Activated CD4-positive, alpha-beta T cell treated with anti-CD3 and anti-CD28 coated beads for 36 hours (primary cell): ENCODE measurements at regions of chr9 and their contacts with region 1.

Region 1: DNA sequence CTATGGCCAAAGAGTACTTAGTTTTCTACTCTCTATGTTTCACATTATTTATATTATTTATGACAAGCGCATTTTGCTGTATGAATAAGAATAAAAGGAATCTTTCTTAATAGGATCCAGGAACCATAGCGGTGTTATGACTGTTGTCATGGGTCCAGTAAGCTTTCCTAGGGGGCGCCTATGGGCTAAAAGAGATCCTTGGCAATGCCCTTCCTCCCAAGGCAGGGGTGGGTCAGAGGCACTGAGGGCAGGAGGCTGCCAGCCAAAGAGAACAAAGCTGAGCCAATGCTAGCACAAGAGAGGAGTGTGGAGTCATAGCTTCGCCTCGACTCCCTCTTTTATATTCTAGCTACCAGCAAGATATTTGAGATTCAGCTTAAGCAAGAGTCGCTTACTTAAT is 98.4 kb upstream of the GNAQ start:
- DNase-seq: no peak
- ATAC-seq: no peak
- H3K4me3 Mint-ChIP-seq: no peak overlapping the region
- H3K27ac Mint-ChIP-seq: no peak overlapping the region
- H3K4me1 Mint-ChIP-seq: peaks cover 22% of the 10 kb centered on the region
- H3K27me3 Mint-ChIP-seq: peaks cover 2% of the 10 kb centered on the region

Region 2: GRCh38 chr9:78171651-78172050 is 41.6 kb after region 1 on chr9:
- CTCF ChIA-PET with region 1: no interaction called
- POLR2A ChIA-PET with region 1: no interaction called
- intact Hi-C with region 1: no loop called
- DNase-seq: no peak
- ATAC-seq: no peak
- H3K4me3 Mint-ChIP-seq: no peak overlapping the region
- H3K27ac Mint-ChIP-seq: no peak overlapping the region
- H3K4me1 Mint-ChIP-seq: no peaks in the 10 kb centered on the region
- H3K27me3 Mint-ChIP-seq: no peaks in the 10 kb centered on the region

Region 3: DNA sequence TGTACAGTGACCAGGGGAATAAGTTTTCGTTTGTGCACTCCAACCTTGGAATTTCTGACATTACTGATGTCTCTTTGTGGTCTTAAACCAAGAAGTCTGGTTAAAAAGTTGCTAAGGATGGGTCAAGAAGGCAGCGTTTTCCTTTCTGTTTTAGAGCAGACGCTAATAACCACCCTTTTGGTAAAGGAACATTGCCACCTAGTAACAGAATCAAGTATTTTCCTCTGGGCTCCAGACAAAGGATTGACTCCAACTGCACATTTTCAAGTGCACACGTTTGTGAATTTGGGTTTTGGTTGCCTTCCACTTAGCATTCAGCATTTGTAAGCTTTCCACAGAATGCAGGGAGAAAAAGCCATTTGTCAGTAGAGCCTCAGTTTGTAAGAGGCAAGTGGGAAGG is 83.7 kb after region 1 on chr9:
- CTCF ChIA-PET with region 1: no interaction called
- POLR2A ChIA-PET with region 1: no interaction called
- intact Hi-C with region 1: loop called in 1 of 2 experiments (anchors 5 kb)
- DNase-seq: no peak
- ATAC-seq: peak; percentile 55
- H3K4me3 Mint-ChIP-seq: no peak overlapping the region
- H3K27ac Mint-ChIP-seq: no peak overlapping the region
- H3K4me1 Mint-ChIP-seq: peaks cover 37% of the 10 kb centered on the region
- H3K27me3 Mint-ChIP-seq: no peaks in the 10 kb centered on the region

Region 4: DNA sequence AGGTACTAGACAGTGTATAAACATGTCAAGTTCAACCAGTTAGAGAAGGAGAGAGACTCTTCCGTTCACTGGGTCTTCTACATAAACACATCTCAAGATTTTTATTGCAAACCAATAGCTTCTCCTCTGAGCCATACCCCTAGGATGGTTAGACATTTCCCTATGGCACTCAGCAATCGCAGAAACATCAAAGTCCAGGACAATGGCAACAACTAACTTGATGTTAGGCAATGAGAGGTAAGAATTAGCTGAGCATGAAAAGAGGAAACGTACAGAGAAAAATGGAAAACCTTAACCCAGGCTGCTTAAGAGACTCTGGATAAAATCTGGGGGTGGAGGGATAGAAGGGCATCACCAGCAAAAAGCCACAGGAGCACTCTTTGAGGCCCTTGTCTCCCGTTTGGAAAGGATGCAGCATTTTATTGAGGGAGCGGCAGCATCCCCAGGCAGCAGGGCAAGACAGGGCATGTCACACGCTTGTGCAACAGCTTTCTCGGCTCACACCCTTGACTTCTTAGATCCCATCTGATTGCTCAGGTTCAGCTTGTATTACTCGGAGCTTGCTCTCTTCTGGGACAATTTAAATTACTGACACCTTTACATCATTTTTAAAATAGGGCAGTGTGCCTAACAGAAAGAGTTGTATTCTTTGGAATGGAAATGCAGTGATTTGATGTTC is 158.3 kb after region 1 on chr9:
- CTCF ChIA-PET with region 1: no interaction called
- POLR2A ChIA-PET with region 1: no interaction called
- intact Hi-C with region 1: no loop called
- DNase-seq: no peak
- ATAC-seq: no peak
- H3K4me3 Mint-ChIP-seq: no peak overlapping the region
- H3K27ac Mint-ChIP-seq: no peak overlapping the region
- H3K4me1 Mint-ChIP-seq: peaks cover 8% of the 10 kb centered on the region
- H3K27me3 Mint-ChIP-seq: no peaks in the 10 kb centered on the region